ENCODE measurements at regions of chr20 and their contacts with region 1.

Region 1: DNA sequence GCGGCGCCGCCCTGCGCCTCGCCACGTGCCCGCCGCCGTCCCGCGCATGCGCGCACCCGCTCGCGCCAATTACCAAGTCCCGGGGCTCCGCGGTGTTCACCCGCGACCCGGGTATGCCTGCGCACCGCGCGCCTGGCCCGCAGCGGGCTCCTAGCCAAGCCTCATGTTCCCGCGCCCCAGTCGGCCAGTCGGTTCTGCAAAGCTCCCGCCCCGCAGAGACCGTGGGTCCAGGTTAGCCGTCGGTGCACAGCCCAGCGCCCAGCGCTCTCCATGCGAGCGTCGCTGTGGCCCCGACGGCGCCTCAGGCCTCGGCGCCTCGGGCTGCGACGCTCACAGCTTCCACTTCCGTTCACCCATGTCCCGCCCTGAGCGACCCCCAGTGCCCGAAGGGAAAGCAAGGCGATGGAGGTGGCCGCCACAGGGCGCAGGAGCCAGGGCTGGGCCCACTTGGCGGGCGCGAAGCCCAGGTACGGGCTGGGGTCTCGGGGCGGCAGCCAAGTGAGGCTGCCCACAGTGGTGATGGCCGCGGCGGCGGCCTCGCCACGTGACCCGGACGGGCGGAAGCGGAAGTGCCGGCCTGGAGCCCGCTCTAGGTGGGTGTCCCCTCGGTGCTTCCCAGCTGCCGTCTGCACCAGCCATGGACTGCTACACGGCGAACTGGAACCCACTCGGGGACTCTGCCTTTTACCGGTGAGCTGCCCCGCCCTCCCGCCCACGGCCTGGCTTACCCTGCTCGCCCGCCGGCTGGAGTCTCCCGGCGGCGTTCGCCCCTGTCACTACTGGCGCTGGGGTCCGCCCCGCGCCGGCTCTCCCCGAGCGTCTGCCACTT is at the starts of genes PCED1A and VPS16:
- DNase-seq: peak; percentile 84 to 93 (median 88)
- ATAC-seq: peak; percentile 96 to 98
- H3K4me3 Mint-ChIP-seq: peak within 1 kb of the TSS; percentile 79 to 91 (median 90)
- H3K27ac Mint-ChIP-seq: peak within 1 kb of the TSS; percentile 82 to 96 (median 94)
- H3K4me1 Mint-ChIP-seq: peaks cover 30 to 53% (median 45%) of the 10 kb centered on the region in 4 donors
- H3K27me3 Mint-ChIP-seq: no peaks in the 10 kb centered on the region
- polyA plus RNA-seq, gene PCED1A: 21.9 to 29.6 (median 23.6) TPM
- polyA plus RNA-seq, gene VPS16: 34.6 to 40.6 (median 39.3) TPM

Region 2: DNA sequence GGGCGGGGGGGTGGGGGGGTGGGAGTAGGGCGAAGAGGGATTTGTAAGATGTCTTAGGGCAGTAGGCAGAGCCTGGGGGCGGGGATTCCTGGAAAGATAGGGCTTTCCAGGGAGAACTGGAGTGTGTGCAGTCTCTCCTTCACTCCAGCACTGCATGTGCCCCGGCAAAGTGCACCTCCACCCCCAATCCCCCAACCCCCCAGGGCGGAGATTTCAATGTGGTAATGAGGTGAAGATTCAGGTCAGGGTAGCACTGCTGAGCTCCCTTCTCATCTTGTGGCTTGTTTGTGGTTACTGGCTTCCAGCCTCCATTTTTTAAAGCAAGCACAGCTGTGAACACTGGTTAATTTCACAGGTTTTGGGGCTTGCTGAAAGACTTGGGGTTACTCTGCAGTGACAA is 18.3 kb before region 1 on chr20:
- POLR2A ChIA-PET with region 1: interaction called, 13 read pairs
- DNase-seq: peak in 7 of 10 donors; percentile 42 to 76 (median 62)
- ATAC-seq: peak; percentile 88 to 96
- H3K4me3 Mint-ChIP-seq: peak overlapping the region in 8 of 10 donors; percentile 50 to 84 (median 78)
- H3K27ac Mint-ChIP-seq: peak overlapping the region in 2 of 10 donors; percentile 22 to 51
- H3K4me1 Mint-ChIP-seq: peaks cover 19 to 39% (median 29%) of the 10 kb centered on the region in 4 donors
- H3K27me3 Mint-ChIP-seq: peaks cover 10 to 20% (median 15%) of the 10 kb centered on the region in 5 donors

Region 3: GRCh38 chr20:2851086-2851485 is 10.7 kb after region 1 on chr20:
- POLR2A ChIA-PET with region 1: interaction called, 15 read pairs
- DNase-seq: no peak
- ATAC-seq: no peak
- H3K4me3 Mint-ChIP-seq: no peak overlapping the region
- H3K27ac Mint-ChIP-seq: peak overlapping the region in 4 of 10 donors; percentile 43 to 72 (median 60)
- H3K4me1 Mint-ChIP-seq: peaks cover 7 to 36% (median 23%) of the 10 kb centered on the region in 4 donors
- H3K27me3 Mint-ChIP-seq: no peaks in the 10 kb centered on the region

Region 4: DNA sequence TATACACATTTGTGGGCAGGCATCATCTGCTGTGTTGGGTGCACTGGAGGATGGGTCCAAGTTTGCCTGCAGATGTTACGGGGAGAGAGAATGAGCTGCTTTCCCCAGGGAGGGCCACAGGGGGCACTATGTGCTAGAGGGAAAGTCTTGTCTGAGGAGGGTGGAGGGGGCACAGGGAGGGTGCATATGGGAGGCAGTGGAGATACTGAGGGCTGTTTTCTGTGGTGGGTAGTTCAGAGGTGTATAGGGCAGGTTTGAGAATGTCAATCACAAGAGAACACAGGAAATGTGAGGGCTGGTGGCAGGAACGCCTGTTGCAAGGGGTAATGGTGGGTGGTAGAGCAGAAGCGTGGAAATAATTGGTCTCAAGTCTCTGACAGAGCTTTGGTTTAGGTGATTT is 25.3 kb after region 1 on chr20:
- POLR2A ChIA-PET with region 1: interaction called, 26 read pairs
- DNase-seq: peak; percentile 22 to 83 (median 54)
- ATAC-seq: peak; percentile 90 to 96
- H3K4me3 Mint-ChIP-seq: peak overlapping the region; percentile 29 to 74 (median 62)
- H3K27ac Mint-ChIP-seq: peak overlapping the region; percentile 71 to 90 (median 84)
- H3K4me1 Mint-ChIP-seq: peaks cover 33 to 50% (median 45%) of the 10 kb centered on the region in 4 donors
- H3K27me3 Mint-ChIP-seq: no peaks in the 10 kb centered on the region

Region 5: GRCh38 chr20:2873010-2873746 is 32.8 kb after region 1 on chr20 and contains the start of gene PTPRA:
- POLR2A ChIA-PET with region 1: interaction called, 13 read pairs
- DNase-seq: peak; percentile 84 to 94 (median 90)
- ATAC-seq: peak; percentile 86 to 88
- H3K4me3 Mint-ChIP-seq: peak within 1 kb of the TSS; percentile 89 to 96 (median 93)
- H3K27ac Mint-ChIP-seq: peak within 1 kb of the TSS; percentile 90 to 97 (median 94)
- H3K4me1 Mint-ChIP-seq: peaks cover 31 to 60% (median 53%) of the 10 kb centered on the region in 4 donors
- H3K27me3 Mint-ChIP-seq: no peaks in the 10 kb centered on the region
- polyA plus RNA-seq, gene PTPRA: 24.6 to 51.4 (median 30.8) TPM

Measured in naive thymus-derived CD8-positive, alpha-beta T cell (primary cell).